ENCODE measurements at regions of chr12 and their contacts with region 1.

Region 1: GRCh38 chr12:123150744-123151456 is at the start of gene PITPNM2:
- DNase-seq: peak; percentile 68 to 81 (median 71)
- ATAC-seq: peak; percentile 55 to 85 (median 78)
- H3K4me3 ChIP-seq: peak within 1 kb of the TSS; percentile 64 to 90 (median 78)
- H3K27ac ChIP-seq: peak within 1 kb of the TSS; percentile 62 to 92 (median 82)
- H3K4me1 ChIP-seq: peaks cover 0 to 34% (median 22%) of the 10 kb centered on the region in 12 donors
- H3K27me3 ChIP-seq: peaks cover 0 to 5% (median 0%) of the 10 kb centered on the region in 9 donors
- CTCF ChIP-seq: peak in 7 of 12 donors; percentile 18 to 43 (median 26)
- POLR2A ChIP-seq: no peak
- total RNA-seq, gene PITPNM2: 13.2 to 28.5 (median 20.7) TPM

Region 2: DNA sequence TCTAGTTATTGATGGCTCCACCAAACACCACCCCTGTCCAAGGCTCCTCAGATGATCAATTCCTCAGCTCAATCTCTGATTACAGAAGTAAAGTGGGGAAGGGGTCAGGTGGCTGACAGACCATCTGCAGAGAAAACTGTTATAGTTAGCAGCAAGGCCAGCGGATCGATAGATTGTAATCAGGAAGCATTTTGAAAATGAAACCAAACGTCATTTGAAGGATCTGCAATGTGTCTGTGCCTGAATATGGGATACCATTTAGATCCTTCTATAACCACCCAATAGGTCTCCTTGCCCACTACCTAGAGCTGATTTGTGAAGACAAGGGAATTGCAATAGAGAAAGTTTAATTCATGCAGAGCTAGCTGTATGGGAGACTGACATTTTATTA is 459.3 kb before region 1 on chr12:
- intact Hi-C with region 1: no loop called
- DNase-seq: no peak
- ATAC-seq: no peak
- H3K4me3 ChIP-seq: no peak overlapping the region
- H3K27ac ChIP-seq: no peak overlapping the region
- H3K4me1 ChIP-seq: no peaks in the 10 kb centered on the region
- H3K27me3 ChIP-seq: no peaks in the 10 kb centered on the region
- CTCF ChIP-seq: no peak
- POLR2A ChIP-seq: no peak

Region 3: GRCh38 chr12:122980183-122981046 is 170.5 kb before region 1 on chr12 and contains the start of gene ARL6IP4:
- intact Hi-C with region 1: loop called in 7 of 10 experiments (anchors 2 to 10 kb)
- DNase-seq: peak; percentile 72 to 86 (median 73)
- ATAC-seq: peak; percentile 15 to 77 (median 68)
- H3K4me3 ChIP-seq: peak within 1 kb of the TSS; percentile 85 to 100 (median 98)
- H3K27ac ChIP-seq: peak within 1 kb of the TSS; percentile 69 to 97 (median 94)
- H3K4me1 ChIP-seq: peaks cover 20 to 82% (median 71%) of the 10 kb centered on the region in 12 donors
- H3K27me3 ChIP-seq: no peaks in the 10 kb centered on the region
- CTCF ChIP-seq: peak in 4 of 12 donors; percentile 10 to 25 (median 18)
- POLR2A ChIP-seq: peak in 1 of 2 donors; percentile 75
- total RNA-seq, gene ARL6IP4: 123 to 236 (median 140) TPM

Region 4: GRCh38 chr12:123075646-123076171 is 75.2 kb before region 1 on chr12:
- intact Hi-C with region 1: loop called in 1 of 10 experiments (anchors 2 kb)
- DNase-seq: peak in 1 of 5 donors; percentile 60
- ATAC-seq: peak in 2 of 4 donors; percentile 8 to 30
- H3K4me3 ChIP-seq: peak overlapping the region in 3 of 12 donors; percentile 9 to 42 (median 11)
- H3K27ac ChIP-seq: peak overlapping the region in 11 of 12 donors; percentile 44 to 85 (median 64)
- H3K4me1 ChIP-seq: peaks cover 14 to 88% (median 65%) of the 10 kb centered on the region in 12 donors
- H3K27me3 ChIP-seq: no peaks in the 10 kb centered on the region
- CTCF ChIP-seq: peak in 5 of 12 donors; percentile 14 to 45 (median 21)
- POLR2A ChIP-seq: no peak

Region 5: GRCh38 chr12:123106628-123107359 is 44.1 kb before region 1 on chr12:
- intact Hi-C with region 1: loop called in 3 of 10 experiments (anchors 5 kb)
- DNase-seq: peak; percentile 55 to 80 (median 67)
- ATAC-seq: peak in 3 of 4 donors; percentile 50 to 79 (median 69)
- H3K4me3 ChIP-seq: no peak overlapping the region
- H3K27ac ChIP-seq: peak overlapping the region; percentile 58 to 91 (median 82)
- H3K4me1 ChIP-seq: peaks cover 15 to 83% (median 65%) of the 10 kb centered on the region in 12 donors
- H3K27me3 ChIP-seq: no peaks in the 10 kb centered on the region
- CTCF ChIP-seq: no peak
- POLR2A ChIP-seq: no peak